ENCODE measurements at regions of chr3 and their contacts with region 1.

Region 1: DNA sequence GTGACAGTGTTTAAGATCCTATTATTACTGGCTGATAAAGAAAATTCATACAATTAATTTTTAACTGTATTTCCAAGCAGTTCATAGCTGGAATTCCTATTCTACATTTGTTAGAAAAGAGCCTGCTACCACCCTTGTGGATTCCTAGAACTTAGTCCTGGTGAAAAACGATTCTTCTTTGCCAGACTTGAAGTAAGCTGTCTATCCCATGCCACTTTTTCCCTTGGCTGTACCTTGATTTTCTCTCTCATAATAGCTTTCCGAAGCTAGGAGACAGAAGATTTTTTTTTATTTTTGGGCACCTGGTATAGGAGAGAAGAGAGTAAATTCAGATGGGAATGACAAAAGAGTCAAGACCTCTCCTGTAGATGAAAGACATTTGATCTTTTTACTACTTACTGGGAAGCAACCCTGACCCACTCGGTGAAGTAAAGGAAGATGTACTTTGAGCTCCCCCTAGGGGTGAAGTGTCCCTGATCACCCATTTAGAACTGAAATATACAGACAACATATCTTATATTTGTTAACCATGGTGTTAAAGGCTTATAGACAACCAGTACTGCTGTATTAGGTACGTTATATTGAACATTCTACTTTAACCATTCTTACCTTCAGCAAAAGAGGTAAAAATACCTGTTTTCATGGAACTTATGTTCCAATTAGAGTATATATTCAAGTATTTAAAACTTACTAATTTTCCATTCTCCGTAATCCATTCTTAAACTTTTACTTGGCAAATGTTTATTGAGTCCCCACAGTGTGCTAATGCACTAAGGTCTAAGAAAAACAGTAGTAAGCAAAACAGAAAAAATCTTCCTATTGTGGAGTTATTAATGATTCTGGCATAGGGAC is 36.2 kb upstream of the C3orf38 start:
- DNase-seq: peak; percentile 14
- CTCF ChIP-seq: peak; percentile 64

Region 2: DNA sequence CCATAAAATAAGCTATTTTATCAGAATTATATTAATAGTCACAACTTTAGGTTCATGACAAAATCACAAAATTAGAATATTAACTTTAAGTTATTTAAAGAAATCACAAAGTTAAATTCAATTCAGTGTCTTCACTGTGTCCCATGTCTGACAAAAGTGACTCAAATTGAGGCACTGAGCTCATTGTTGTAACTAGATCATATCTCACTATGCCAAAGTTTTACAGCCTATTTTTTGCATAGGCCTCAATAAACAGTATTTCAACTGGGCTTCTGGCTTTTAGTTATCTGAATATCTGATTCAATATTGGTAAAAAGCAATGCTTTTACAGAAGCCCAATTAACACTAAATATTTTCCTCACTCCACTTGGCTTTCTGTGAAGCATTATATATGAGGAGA is 513.0 kb before region 1 on chr3:
- CTCF ChIA-PET with region 1: no interaction called
- POLR2A ChIA-PET with region 1: no interaction called
- DNase-seq: no peak
- CTCF ChIP-seq: no peak

Region 3: DNA sequence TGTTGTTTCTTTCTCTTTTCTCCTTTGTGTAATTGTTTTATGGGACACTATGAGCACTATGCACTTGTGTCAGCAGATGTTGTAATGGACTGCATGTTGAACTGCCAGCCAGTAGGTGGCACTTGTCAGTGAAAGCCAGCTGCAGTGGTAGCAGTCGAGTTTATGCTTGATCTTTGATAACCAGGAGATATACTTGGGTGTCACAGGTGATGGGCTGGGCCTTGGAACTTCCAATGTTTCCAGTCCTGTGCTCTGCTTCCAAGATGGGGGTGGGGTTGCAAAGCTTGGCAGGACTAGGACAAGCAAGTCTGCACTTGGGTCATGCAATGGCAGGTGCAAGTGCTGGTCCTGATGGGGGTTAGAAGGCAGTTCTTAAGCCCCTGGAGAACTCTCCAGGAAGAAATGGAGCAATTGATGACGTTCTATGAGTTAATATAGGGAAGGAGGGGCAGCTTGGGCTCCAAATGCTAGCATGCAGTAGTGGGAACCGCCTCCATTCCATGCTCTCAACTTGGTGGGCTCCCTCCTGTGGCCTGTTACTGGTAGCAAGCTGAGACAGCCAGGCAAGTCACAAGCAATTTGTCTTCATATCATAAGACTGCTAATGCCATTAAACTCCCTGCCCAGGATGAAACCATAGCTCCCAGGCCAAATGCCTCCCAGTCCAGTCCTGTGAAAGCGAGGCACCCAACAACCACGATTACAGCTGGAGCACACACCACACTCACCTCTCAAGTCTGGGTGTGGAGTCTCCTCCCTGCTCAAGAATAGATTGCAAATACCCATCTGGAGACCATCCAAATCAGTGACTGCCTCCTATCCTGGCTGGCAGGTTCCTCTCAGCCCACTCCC is 342.0 kb before region 1 on chr3:
- CTCF ChIA-PET with region 1: interaction called, 22 read pairs
- POLR2A ChIA-PET with region 1: no interaction called
- DNase-seq: peak; percentile 24
- CTCF ChIP-seq: peak; percentile 88

Region 4: DNA sequence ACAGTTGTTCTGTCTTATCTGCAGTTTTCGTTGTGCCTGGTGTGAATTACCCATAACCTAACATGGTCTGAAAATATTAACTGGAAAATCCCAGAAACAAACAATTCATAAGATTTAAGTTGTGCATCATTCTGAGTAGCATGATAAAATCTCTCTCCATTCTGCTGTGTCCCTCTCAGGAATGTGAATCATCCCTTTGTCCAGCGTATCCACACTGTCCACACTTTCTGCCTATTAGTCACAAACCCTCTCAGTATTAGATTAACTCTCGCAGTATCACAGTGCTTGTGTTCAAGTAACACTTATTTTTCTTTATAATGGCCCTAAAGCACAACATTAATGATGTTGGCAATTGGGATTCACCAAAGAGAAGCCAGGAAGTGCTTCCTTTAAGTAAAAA is 257.9 kb before region 1 on chr3:
- CTCF ChIA-PET with region 1: no interaction called
- POLR2A ChIA-PET with region 1: no interaction called
- DNase-seq: no peak
- CTCF ChIP-seq: no peak

Region 5: DNA sequence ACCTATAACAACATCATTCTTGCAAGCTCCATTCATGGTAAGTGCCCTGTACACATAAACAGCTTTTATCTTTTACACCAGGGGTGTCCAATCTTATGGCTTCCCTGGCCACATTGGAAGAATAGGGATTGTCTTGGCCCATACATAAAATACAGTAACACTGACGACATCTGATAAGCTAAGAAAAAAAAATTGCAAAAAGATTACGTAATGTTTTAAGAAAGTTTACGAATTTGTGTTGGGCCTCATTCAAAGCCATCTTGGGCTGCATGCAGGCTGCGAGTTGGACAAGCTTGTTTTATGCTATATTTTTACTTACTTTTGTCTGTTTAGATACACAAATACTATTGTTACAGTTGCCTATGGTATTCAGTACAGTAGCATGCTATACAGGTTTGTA is 22.9 kb before region 1 on chr3:
- CTCF ChIA-PET with region 1: interaction called, 21 read pairs
- POLR2A ChIA-PET with region 1: no interaction called
- DNase-seq: no peak
- CTCF ChIP-seq: no peak

Region 6: DNA sequence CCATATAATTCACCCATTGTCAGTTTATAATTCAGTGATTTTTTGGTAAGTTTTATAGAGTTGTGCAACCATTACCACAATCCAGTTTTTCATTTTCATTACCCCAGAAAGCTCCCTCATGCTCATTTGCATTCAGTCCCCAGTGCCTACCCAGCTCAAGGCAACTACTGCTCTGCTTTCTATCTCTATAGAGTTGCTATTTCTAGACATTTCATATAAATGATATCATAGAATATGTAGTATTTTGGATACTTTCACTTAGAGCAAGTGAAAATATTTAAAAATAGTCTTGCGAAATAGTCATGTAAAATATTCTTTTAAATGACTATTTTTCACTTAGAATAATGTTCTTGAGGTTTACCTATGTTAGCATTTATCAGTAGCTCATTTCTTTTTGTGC is 12.4 kb before region 1 on chr3:
- CTCF ChIA-PET with region 1: interaction called, 22 read pairs
- POLR2A ChIA-PET with region 1: no interaction called
- DNase-seq: no peak
- CTCF ChIP-seq: no peak

Region 7: DNA sequence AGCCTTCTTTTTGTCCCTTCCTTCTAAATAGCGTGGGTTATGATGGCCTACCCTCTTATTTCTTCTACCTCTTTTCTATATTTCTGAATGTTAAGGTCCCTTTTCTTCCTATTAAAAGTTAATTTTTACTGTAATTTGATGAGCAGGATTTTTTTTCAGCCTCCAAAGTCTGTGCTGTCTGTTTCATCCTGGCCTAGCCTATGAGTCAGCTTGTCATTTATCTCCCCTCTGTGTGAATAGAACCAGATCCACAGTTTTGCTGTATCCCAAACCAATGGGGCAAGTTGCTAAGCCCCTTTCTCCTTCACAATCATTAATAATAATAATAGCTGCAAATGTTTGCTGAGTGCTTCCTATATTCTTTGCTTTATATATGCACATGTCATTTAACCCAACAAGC is 18.2 kb after region 1 on chr3:
- CTCF ChIA-PET with region 1: interaction called, 32 read pairs
- POLR2A ChIA-PET with region 1: no interaction called
- DNase-seq: no peak
- CTCF ChIP-seq: no peak

Region 8: DNA sequence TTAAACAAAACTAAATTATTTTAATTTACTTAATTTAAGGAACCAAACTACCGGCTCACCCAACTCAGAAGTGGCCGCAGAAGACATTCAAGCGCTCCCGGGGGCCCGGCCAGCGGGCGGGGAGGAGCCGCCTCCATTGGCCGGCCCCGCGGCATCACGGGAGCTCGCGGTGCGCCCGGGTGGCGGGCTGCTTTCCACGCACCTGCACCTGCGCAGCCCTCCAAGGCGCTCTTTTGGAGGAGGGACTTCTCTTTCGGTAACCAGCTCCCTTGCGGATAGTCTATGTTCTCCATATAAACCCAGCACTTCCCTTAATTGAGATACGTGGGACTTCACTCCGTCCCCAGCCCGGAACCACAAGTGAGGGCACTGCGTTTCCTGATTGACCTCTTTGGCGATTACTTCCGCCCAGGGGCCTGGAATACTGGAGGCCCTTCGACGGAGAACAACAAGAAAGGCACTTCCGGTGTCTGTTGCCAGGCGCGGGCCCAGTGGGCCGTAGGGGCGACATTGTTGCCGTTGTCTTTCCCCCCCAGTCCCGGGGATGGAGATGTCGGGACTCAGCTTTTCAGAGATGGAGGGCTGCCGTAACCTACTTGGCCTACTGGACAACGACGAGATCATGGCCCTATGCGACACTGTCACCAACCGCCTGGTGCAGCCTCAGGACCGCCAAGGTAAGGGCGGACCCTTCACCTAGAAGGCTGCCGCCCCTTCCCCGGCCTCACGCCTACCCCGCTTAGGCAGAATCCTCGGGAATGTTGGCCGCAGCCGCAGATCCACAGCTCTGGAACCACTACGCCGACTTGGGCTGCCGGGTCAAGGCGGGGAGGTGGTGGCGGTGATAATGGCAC is 36.2 kb after region 1 on chr3 and contains the start of gene C3orf38:
- CTCF ChIA-PET with region 1: interaction called, 12 read pairs
- POLR2A ChIA-PET with region 1: no interaction called
- DNase-seq: peak; percentile 86
- CTCF ChIP-seq: no peak

Region 9: DNA sequence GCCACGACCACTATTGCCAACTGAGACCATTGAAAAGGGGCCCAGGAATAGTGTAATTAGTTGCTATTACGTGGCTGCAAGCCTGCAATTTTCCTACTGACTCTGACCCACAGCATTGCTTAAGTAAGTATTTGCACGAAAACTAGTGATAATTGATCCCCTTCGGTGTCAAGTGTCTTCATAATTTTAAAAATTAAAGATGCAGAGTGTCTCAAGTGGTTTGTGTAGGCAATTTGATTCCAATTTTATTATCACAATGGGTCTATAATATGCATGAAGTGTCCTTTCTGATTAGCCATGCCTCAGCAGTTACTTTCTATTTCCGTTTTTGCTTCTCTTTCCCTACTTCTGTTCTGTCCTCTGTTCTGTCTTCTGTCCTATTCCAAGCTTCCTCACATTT is 295.4 kb after region 1 on chr3:
- CTCF ChIA-PET with region 1: no interaction called
- POLR2A ChIA-PET with region 1: no interaction called
- DNase-seq: no peak
- CTCF ChIP-seq: no peak